ENCODE measurements at regions of chr5 and their contacts with region 1.

Region 1: DNA sequence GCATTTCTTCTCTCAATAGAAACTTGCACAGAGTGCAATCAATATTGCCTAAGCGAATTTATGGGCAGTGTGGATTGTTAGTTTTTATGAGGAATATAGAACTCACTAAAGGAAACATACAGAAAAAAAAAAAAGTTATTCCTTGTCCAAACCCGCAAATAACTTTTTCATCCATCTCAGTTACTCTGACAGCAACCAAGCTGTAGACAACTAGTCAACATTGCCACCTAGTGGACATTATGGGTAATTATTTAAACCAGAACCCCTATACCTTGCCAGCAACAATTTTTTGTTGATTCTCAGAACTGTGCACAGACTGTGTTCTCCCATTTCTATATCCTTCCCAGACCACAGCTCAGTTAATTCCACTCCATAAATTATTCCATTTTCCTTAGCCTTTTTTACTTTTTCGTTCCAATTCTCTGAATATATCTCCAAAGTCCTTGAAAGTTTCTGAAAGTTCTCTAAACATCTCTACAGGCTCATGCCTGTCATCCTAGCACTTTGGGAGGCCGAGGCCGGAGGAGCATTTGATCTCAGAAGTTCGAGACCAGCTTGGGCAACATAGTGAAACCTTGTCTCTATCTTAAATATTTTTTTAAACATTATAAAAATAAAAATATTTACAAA is 2.6 kb upstream of the AFAP1L1 start:
- DNase-seq: no peak
- H3K4me3 ChIP-seq: no peak overlapping the region
- H3K27ac ChIP-seq: no peak overlapping the region
- H3K27me3 ChIP-seq: peaks cover 3% of the 10 kb centered on the region
- CTCF ChIP-seq: peak; percentile 74

Region 2: GRCh38 chr5:149280124-149280523 is 11.1 kb after region 1 on chr5:
- CTCF ChIA-PET with region 1: interaction called, 11 read pairs
- POLR2A ChIA-PET with region 1: no interaction called
- DNase-seq: no peak
- H3K4me3 ChIP-seq: no peak overlapping the region
- H3K27ac ChIP-seq: no peak overlapping the region
- H3K27me3 ChIP-seq: no peaks in the 10 kb centered on the region
- CTCF ChIP-seq: 0 out of 2 replicates have a peak, but pooled peaks have one; percentile 2

Region 3: DNA sequence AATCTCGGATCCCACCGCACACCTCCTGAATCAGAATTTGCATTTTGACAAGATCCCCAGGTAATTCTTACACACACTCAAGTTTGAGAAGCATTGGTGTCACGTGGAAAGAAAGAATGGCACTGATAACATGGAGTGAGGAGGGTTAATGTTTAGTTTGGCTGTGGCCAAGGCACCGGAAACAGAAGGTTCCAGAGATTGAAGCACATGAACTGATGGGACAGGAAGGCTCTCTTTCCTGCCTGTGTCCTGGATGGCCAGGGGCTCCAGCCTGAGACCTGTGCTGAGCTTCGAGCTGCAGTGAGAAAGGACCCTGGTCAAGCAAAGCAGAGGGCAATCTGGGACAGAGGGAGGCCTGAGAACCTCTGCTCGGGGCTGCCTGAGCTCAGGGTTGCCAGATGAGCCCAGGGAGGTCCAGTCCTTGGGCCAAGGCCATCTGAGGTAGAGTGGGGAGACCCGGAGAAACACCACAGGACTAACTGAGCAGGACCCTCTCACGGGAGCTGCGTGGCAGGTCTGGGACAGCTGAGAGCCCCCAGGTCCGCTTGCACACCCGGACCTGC is 29.9 kb after region 1 on chr5:
- CTCF ChIA-PET with region 1: no interaction called
- POLR2A ChIA-PET with region 1: no interaction called
- DNase-seq: no peak
- H3K4me3 ChIP-seq: no peak overlapping the region
- H3K27ac ChIP-seq: no peak overlapping the region
- H3K27me3 ChIP-seq: no peaks in the 10 kb centered on the region
- CTCF ChIP-seq: no peak

Measured in AG04450 (cell line).